Mammary epithelial cell (primary cell): ENCODE measurements at regions of chr6 and their contacts with region 1.

Region 1: DNA sequence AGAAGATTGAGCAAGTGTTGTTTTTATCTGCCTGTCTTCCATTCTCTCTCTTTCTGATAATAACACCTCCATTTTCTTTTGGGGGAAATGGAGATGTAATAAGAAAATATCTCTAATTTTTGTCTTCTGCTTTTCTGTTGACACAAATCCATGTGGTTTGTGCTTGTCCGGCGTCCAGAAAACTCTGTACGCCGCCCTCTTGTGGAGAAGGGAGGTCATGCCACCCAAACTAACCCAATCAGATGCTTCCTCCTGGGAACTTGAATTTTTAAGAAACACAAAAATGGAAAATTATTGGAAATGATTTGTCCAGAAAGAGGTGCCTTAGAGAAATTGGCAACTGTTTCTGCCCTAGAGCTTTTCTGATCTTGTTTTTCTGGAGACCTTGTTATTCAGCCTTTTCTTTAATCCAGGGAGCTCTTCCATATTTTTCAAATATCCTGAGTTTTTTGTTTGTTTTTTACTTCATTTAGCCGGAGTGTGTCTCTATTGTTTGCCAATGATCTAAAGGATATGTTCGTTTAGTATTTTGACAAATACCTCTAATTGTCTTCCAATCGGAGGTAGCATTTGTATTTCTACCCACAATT is 17.8 kb upstream of the FNDC1 start:
- DNase-seq: peak; percentile 19
- H3K4me3 ChIP-seq: no peak overlapping the region
- H3K27ac ChIP-seq: no peak overlapping the region
- H3K4me1 ChIP-seq: no peaks in the 10 kb centered on the region
- H3K27me3 ChIP-seq: no peaks in the 10 kb centered on the region
- CTCF ChIP-seq: peak; percentile 82 to 86

Region 2: GRCh38 chr6:159056003-159056402 is 95.4 kb before region 1 on chr6:
- CTCF ChIA-PET with region 1: no interaction called
- dilution Hi-C with region 1: loop called (anchors 5 kb)
- in situ Hi-C with region 1: no loop called
- intact Hi-C with region 1: no loop called
- DNase-seq: no peak
- H3K4me3 ChIP-seq: no peak overlapping the region
- H3K27ac ChIP-seq: no peak overlapping the region
- H3K4me1 ChIP-seq: no peaks in the 10 kb centered on the region
- H3K27me3 ChIP-seq: peaks cover 4% of the 10 kb centered on the region
- CTCF ChIP-seq: no peak

Region 3: DNA sequence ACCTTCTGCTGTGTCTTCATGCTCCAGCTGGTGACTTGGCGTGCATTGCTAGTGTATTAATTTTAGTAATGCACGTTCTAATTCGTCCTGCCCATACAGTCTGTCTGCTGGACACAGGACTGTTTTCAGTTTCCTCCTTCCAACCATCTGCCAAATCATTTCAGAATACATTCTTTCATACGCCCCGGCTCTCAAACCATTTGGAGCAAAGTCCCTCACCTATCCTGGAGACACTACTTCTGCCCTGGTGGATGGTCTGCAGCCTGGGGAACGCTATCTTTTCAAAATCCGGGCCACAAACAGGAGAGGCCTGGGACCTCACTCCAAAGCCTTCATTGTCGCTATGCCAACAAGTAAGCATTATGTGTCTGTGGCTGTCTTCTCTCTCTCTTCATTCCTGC is 78.3 kb after region 1 on chr6:
- CTCF ChIA-PET with region 1: no interaction called
- dilution Hi-C with region 1: no loop called
- in situ Hi-C with region 1: no loop called
- intact Hi-C with region 1: no loop called
- DNase-seq: no peak
- H3K4me3 ChIP-seq: no peak overlapping the region
- H3K27ac ChIP-seq: no peak overlapping the region
- H3K4me1 ChIP-seq: peaks cover 10% of the 10 kb centered on the region
- H3K27me3 ChIP-seq: peaks cover 16% of the 10 kb centered on the region
- CTCF ChIP-seq: no peak

Region 4: DNA sequence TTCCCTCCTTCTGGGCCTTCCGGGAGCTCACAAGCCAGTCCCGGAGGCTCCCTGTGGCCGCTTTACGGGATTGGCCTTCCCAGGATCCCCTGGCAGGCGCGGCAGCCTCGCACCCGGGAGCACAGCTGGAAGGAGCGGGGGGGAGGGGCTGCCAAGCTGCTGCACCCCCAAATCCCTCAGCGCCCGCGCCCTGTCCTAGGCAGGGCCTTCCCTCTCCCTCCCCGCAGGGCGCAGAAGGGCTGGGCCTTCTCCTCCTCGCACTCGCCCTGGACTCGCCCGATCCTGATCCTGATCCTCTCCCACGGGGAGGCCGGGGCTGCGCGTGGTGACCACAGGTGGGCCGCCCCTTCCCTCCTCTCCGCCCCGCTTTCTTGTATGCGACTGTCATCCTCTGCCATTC is 164.2 kb after region 1 on chr6:
- CTCF ChIA-PET with region 1: no interaction called
- dilution Hi-C with region 1: no loop called
- in situ Hi-C with region 1: no loop called
- intact Hi-C with region 1: no loop called
- DNase-seq: no peak
- H3K4me3 ChIP-seq: no peak overlapping the region
- H3K27ac ChIP-seq: no peak overlapping the region
- H3K4me1 ChIP-seq: no peaks in the 10 kb centered on the region
- H3K27me3 ChIP-seq: no peaks in the 10 kb centered on the region
- CTCF ChIP-seq: no peak

Region 5: DNA sequence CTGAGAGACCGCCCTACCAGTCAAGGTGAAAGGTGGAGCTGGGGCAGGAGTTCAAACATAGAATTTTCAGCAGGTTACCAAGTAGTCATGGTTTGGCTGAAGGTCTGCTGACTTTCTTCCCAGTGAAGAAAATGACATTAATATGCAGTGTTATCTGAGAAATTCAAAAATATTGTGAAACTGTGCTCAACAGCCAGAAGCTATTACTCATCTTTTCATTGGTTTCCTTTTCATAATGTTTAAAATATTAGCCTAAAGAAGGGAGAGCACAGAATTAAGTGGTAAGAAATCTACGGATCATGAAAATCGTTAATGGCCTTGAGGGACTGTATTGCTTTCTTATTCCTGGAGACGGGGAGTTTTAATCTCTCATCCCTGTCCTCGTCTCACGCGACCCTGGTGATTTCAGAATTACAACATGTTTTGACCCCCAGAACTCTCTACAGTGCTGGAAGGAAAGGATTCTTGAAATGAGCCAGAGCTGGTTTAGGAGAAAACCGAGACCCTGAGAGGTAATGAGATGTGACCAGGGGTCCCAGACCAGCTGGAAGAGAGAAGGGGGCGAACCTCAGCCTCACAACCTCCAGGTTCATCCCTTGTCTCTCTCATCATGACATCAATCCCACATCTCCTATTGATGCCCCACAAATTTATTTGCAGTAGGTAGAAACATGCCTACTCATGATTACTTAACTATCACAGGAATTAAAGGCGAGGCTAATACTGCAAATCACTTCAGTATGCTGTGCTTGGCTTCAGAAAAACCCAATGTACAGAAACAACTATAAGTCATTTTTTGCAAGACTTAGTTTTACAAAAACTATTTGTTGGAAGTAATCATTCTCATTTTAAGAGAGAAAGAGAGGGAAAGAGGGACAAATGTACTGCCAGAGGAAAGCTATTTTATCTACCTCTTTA is 227.3 kb after region 1 on chr6:
- CTCF ChIA-PET with region 1: no interaction called
- dilution Hi-C with region 1: no loop called
- in situ Hi-C with region 1: no loop called
- intact Hi-C with region 1: no loop called
- DNase-seq: no peak
- H3K4me3 ChIP-seq: no peak overlapping the region
- H3K27ac ChIP-seq: no peak overlapping the region
- H3K4me1 ChIP-seq: no peaks in the 10 kb centered on the region
- H3K27me3 ChIP-seq: no peaks in the 10 kb centered on the region
- CTCF ChIP-seq: no peak

Region 6: DNA sequence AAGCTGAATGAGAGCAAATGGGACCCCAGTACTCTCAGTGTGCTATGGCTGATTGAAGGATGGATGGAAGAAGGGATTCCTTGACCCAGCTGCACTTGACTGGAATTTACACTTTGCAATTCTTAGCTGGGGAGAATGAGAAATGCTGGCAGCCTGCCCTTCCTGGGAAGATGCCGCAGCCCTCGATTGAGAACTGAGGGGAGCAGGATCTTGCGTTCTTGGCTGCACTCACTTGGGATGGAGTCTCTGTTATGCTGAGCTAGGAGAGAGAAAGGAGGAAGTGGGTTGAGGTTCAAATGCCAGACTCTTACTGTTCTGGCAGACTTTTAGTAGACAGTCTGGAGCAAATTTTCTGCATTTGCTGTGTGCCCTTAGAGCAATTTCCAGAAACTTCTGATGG is 239.0 kb after region 1 on chr6:
- CTCF ChIA-PET with region 1: no interaction called
- dilution Hi-C with region 1: no loop called
- in situ Hi-C with region 1: no loop called
- intact Hi-C with region 1: no loop called
- DNase-seq: no peak
- H3K4me3 ChIP-seq: no peak overlapping the region
- H3K27ac ChIP-seq: no peak overlapping the region
- H3K4me1 ChIP-seq: no peaks in the 10 kb centered on the region
- H3K27me3 ChIP-seq: no peaks in the 10 kb centered on the region
- CTCF ChIP-seq: no peak